AG04449 (cell line): ENCODE measurements at regions of chr20 and their contacts with region 1.

Region 1: DNA sequence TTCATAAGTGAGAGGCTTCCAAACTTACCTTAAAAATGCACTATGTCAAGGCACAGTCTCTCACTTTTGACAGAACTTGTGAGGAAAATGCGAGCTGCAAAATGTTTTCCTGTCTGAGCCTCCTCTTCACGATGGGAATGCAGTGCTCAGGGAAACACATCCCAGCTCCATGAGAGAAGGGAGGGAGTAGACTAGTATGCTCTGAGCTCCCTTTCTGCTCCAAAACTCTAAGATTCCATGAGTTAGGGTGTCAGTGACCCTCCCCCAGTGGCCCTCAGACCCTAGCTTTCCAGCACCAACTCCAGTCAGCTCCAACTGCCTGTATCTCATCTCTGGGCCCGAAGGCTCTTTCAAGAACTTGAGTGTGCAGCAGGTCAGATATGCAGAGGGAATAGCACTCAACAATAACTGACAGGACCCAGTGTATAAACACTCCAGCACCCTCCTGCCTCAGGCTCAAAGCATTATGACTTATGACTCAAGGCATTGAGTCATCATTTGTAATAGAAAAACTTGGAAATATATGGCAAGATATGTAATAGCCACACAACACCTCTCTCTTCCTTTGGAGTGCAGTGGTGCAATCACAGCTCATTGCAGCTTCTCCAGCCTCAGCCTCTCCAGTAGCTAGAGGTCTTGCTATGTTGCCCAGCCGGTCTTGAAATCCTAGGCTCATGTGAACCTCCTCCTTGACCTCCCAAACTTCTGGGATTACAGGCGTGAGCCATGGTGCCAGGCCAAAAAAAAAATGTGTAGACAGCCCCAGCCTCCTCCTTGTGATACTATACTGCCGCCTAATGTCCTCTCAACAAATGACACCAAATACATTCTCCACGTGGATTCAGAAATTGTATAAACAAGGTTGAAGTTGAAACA is 16.7 kb upstream of the ENTPD6 start:
- DNase-seq: peak; percentile 31
- H3K4me3 ChIP-seq: no peak overlapping the region; the same call in 1 of the 2 replicates
- CTCF ChIP-seq: peak; percentile 66

Region 2: GRCh38 chr20:25005220-25005619 is 173.6 kb before region 1 on chr20:
- CTCF ChIA-PET with region 1: interaction called, 10 read pairs
- POLR2A ChIA-PET with region 1: no interaction called
- DNase-seq: no peak
- H3K4me3 ChIP-seq: no peak overlapping the region
- CTCF ChIP-seq: no peak

Region 3: DNA sequence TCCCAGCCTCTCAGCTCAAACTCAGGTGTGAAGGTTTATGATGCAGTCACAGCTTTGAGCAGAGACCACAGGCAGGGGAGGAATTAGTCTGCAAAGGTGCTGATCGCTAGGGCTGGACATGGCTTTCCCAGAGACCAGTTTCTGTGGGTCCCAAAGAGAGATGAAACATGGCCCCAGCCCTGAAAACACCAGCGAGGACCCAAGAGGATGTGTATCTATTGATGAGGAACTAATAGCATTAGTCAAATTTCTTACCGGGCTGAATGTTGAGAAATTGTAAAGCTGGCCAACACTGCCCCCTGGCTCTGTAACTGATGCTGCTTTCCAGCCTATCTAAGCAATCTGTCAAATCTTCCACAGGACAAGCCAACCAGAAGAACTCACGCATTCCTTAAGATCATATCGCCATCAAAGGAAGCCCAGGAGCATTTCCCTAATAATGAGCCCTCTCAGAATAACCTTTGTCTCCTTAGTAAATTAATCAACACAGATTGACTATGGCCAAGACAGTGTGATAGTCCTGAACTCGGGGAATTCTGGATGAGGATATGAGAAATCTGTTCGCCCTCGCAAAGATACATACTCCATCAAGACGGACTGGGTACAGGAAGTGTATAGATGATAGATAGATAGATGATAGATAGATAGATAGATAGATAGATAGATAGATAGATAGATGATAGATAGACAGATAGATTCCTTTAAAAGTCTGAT is 113.0 kb before region 1 on chr20:
- CTCF ChIA-PET with region 1: interaction called, 13 read pairs
- POLR2A ChIA-PET with region 1: no interaction called
- DNase-seq: no peak
- H3K4me3 ChIP-seq: no peak overlapping the region
- CTCF ChIP-seq: peak; percentile 79

Region 4: GRCh38 chr20:25148982-25149846 is 29.6 kb before region 1 on chr20:
- CTCF ChIA-PET with region 1: no interaction called
- POLR2A ChIA-PET with region 1: no interaction called
- DNase-seq: no peak
- H3K4me3 ChIP-seq: peak overlapping the region; percentile 49
- CTCF ChIP-seq: no peak

Region 5: GRCh38 chr20:25195014-25195961 is 16.5 kb after region 1 on chr20 and contains the start of gene ENTPD6:
- CTCF ChIA-PET with region 1: interaction called, 16 read pairs
- POLR2A ChIA-PET with region 1: no interaction called
- DNase-seq: peak; percentile 5
- H3K4me3 ChIP-seq: peak within 1 kb of the TSS; percentile 86
- CTCF ChIP-seq: peak; percentile 26